ENCODE measurements at regions of chrX and their contacts with region 1.

Region 1: GRCh38 chrX:4547213-4547836 is 833.9 kb upstream of the PRKX start:
- DNase-seq: peak; percentile 39 to 92 (median 53)

Region 2: DNA sequence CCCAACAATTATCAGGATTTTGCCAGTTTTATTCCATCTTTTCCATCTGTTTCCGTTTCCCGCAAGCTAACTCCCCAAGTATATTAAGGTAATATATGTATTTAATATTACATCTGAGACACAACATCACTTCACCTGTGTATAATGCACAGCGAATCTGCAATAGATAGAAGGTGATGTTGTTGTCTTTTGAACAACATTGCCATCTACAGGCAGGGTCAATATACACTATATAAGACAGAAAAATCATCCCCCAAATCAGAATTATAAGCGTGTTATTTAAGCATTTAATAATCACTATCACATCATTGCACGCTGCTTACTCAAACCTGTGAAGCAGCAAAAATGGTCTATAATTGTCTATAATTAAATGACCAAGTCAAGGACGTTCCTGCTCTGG is 565.8 kb after region 1 on chrX:
- intact Hi-C with region 1: loop called (anchors 2 kb)
- DNase-seq: no peak

Region 3: GRCh38 chrX:5876984-5877596 is 1329.8 kb after region 1 on chrX:
- intact Hi-C with region 1: loop called (anchors 10 kb)
- DNase-seq: peak in 4 of 10 donors; percentile 8 to 52 (median 15)

Measured in posterior cingulate gyrus (tissue), 11 donors.